ENCODE measurements at regions of chr16 and their contacts with region 1.

Region 1: GRCh38 chr16:2296661-2297505 is 29.0 kb upstream of the RNPS1 start:
- DNase-seq: peak; percentile 82
- H3K4me3 ChIP-seq: no peak overlapping the region
- H3K27ac ChIP-seq: no peak overlapping the region
- H3K4me1 ChIP-seq: no peaks in the 10 kb centered on the region; a peak in 1 of 4 replicates
- H3K27me3 ChIP-seq: no peaks in the 10 kb centered on the region
- CTCF ChIP-seq: peak; percentile 56
- EP300 ChIP-seq: no peak
- RAD21 ChIP-seq: peak; percentile 55

Region 2: GRCh38 chr16:2340564-2341455 is 43.9 kb after region 1 on chr16 and contains the start of gene ABCA3:
- CTCF ChIA-PET with region 1: interaction called, 11 read pairs
- POLR2A ChIA-PET with region 1: no interaction called
- DNase-seq: peak; percentile 100
- H3K4me3 ChIP-seq: peak within 1 kb of the TSS; percentile 76 to 82
- H3K27ac ChIP-seq: peak within 1 kb of the TSS in 1 of 2 experiments; percentile 80; a peak in 2 of 4 replicates
- H3K4me1 ChIP-seq: peaks cover 0 to 20% of the 10 kb centered on the region in 2 experiments; a peak in 2 of 4 replicates
- H3K27me3 ChIP-seq: no peaks in the 10 kb centered on the region
- CTCF ChIP-seq: peak; percentile 96
- EP300 ChIP-seq: no peak
- RAD21 ChIP-seq: peak; percentile 81
- polyA plus RNA-seq, gene ABCA3: 6.9 and 9.9 TPM in 2 replicates